Dorsolateral prefrontal cortex (tissue), 120 donors: ENCODE measurements at regions of chr22 and their contacts with region 1.

Region 1: GRCh38 chr22:48535868-48536540 is 1291.7 kb downstream of the BRD1 start:
- DNase-seq: peak in 9 of 10 donors; percentile 38 to 85 (median 62)
- H3K4me3 ChIP-seq: peak overlapping the region; percentile 5 to 70 (median 41)
- H3K27ac ChIP-seq: peak overlapping the region in 58 of 59 donors; percentile 38 to 96 (median 86)
- H3K27me3 ChIP-seq: no peaks in the 10 kb centered on the region
- CTCF ChIP-seq: no peak

Region 2: GRCh38 chr22:48450188-48450825 is 85.7 kb before region 1 on chr22:
- intact Hi-C with region 1: no loop called
- DNase-seq: no peak
- H3K4me3 ChIP-seq: no peak overlapping the region
- H3K27ac ChIP-seq: no peak overlapping the region
- H3K27me3 ChIP-seq: peaks cover 0 to 5% (median 0%) of the 10 kb centered on the region in 45 donors
- CTCF ChIP-seq: no peak

Region 3: DNA sequence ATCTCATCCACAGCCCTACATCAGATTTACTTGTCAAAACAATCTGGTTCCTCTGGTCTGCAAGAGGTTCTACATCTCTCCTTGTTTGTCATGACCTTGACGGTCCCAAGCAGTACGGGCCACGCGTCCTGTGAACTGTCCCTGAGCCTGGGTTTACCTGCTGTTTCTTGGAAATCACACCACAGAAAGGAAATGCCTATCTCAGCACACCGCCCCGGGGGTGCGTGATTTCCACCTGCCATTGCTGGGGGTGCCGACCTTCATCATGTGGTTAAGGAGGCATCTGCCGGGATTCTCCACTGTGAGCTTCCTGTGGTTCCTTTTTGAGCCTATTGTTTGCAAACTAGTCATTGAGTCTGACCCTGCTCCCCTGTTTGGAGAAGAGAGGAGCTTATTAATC is 71.8 kb before region 1 on chr22:
- intact Hi-C with region 1: no loop called
- DNase-seq: peak in 2 of 10 donors; percentile 10 to 11
- H3K4me3 ChIP-seq: no peak overlapping the region
- H3K27ac ChIP-seq: no peak overlapping the region
- H3K27me3 ChIP-seq: no peaks in the 10 kb centered on the region
- CTCF ChIP-seq: no peak

Region 4: DNA sequence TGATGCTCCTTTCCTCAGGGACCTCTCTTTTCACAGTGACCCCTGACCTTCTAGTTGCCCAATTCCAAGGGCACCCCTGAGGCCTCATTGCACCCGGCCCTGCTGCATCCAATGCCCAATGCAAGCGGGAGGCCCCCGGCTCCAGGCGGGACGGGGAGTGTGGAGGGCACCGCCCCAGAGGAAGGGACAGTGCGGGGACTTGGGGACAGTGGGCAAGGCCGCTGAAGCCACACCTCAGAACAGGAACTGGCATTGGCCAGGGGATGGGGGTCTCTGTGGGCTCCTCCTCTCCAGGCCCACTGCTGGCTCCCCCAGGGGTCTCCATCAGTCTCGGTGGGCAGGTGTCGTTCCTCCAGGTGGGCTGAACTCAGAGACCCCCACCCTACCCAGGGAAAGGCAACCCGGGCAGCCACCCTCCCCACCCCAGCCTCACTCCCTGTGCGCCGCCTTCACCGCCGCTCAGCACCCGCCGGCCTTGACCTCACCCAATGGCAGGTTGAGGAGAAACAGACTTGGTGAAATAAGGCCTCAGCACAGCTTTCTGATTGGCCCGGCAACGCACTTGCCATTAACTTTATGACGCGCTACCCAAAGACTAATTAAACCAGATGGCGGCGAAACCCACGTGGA is 20.3 kb before region 1 on chr22:
- intact Hi-C with region 1: loop called in 1 of 2 experiments (anchors 2 kb)
- DNase-seq: no peak
- H3K4me3 ChIP-seq: no peak overlapping the region
- H3K27ac ChIP-seq: peak overlapping the region in 7 of 59 donors; percentile 6 to 90 (median 35)
- H3K27me3 ChIP-seq: no peaks in the 10 kb centered on the region
- CTCF ChIP-seq: no peak

Region 5: DNA sequence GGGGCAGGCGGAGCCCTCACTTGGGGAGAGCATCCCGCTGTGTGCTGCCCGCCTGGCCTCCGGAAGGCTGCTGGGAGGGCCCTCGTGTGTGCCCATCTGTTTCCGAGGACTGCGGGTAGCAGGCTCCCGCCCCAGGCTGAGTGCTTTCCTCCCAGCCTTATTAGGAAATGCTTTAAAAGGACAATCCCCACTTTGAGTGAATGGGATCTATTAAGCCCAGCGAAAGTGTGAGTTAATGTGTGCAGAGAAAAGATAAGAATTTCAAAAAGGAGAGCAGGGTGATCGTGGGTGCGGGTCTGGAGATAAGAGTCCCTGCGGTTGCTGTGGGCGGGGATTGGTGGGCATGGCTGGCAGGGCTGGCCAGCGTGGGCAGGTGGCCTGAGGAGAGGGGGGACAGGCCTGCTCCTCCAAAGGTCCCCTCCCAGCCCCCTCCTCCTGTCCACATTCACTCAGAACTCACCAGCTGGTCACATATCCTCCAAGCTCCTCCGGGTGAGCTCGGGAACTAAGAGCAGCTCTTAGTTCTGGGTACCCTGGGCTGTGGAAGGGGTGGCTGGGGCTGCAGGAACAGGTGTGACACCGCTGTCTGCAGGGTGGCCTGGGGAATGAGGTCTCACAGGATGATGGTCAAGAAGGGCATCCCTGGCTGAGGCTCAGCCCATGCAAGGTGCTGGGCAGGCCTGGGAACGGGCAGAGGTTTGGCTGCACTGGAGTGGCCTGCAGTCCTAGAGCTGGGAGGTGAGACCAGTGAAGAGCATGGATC is 31.4 kb after region 1 on chr22:
- intact Hi-C with region 1: loop called in 1 of 2 experiments (anchors 5 kb)
- DNase-seq: peak in 1 of 10 donors; percentile 66
- H3K4me3 ChIP-seq: peak overlapping the region in 22 of 59 donors; percentile 6 to 44 (median 20)
- H3K27ac ChIP-seq: peak overlapping the region in 13 of 59 donors; percentile 6 to 71 (median 39)
- H3K27me3 ChIP-seq: no peaks in the 10 kb centered on the region
- CTCF ChIP-seq: no peak